Right ventricle myocardium inferior (tissue), 1 donor: ENCODE measurements at regions of chr15 and their contacts with region 1.

Region 1: GRCh38 chr15:42650208-42651066 is 75.0 kb downstream of the STARD9 start:
- DNase-seq: no peak
- ATAC-seq: peak; percentile 96

Region 2: GRCh38 chr15:42495361-42496212 is 154.8 kb before region 1 on chr15 and contains the start of gene SNAP23:
- intact Hi-C with region 1: no loop called
- DNase-seq: peak; percentile 97
- ATAC-seq: peak; percentile 96
- total RNA-seq, gene SNAP23: 23.5 TPM

Region 3: GRCh38 chr15:42548253-42549031 is 102.0 kb before region 1 on chr15 and contains the starts of genes HAUS2 and LRRC57:
- intact Hi-C with region 1: loop called (anchors 2 kb)
- DNase-seq: peak; percentile 95
- ATAC-seq: peak; percentile 95
- total RNA-seq, gene HAUS2: 11.7 TPM
- total RNA-seq, gene LRRC57: 15.1 TPM

Region 4: DNA sequence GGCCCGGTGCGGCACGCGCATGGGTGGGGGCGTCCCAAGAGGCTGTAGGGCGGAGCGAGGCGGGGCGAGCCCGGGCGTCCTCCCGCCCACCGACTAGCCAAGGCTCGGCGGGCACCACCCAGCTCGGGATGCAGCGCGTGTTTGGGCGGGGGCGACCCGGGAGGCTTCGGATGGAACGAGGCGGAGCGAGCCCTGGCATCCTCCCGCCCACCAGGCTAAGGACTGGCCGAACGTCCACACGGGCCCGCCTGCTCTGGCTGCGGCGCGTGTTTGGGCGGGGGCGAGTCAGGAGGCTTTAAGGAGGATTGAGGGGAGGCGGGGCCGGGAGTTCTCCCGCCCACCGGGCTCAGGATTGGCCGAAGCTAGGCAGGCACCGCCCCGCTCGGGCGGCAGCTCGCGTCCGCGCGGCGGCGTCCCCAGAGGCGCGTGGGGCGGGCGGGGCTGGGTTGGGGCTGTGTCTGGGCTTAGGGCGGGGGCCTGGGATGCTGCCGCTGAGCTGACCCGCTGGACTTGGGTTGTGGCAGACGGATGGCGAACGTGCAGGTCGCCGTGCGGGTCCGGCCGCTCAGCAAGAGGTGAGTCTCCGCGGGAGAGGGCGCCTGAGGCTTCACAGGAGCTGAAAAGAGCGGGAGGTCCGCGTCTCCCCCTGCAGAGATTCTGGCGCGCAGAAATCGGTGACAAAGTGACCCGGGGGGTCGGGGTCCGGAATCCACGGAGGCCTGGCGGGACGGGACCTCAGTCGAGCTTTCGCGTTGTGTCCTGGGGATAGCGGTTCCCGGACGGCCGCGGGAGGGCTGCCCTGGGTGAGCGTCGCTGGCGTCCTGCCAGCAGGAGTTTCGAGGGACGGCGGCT is 75.0 kb before region 1 on chr15 and contains the start of gene STARD9:
- intact Hi-C with region 1: loop called (anchors 5 kb)
- DNase-seq: peak; percentile 99
- ATAC-seq: peak; percentile 97
- total RNA-seq, gene STARD9: 7.2 TPM

Region 5: DNA sequence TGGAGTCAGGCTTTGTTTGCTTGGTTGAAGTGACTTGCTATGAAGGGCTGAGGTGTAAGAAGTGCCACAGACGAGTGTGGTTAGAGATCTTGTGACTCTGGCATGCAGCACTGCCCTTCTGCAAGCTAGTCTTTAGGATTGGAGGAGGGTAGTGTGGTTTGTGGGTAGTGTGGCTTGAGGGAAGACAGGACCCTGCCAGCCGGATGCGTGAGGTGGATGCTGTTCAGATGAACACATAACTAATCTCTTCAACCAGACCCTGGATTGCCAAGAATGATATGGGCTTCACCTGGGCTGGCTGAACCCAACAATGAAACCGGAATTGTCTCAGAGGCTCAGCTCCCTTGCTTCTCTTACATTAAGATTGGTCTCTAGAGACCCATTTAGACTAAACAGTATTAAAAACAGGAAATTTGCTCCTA is 42.3 kb before region 1 on chr15:
- intact Hi-C with region 1: loop called (anchors 5 kb)
- DNase-seq: peak; percentile 33
- ATAC-seq: no peak